Body of pancreas (tissue), 4 donors: ENCODE measurements at regions of chr12 and their contacts with region 1.

Region 1: GRCh38 chr12:101830367-101831325 is at the start of gene GNPTAB:
- DNase-seq: peak; percentile 96 to 98 (median 96)
- ATAC-seq: peak; percentile 98
- H3K4me3 ChIP-seq: peak within 1 kb of the TSS; percentile 45 to 84
- H3K27ac ChIP-seq: peak within 1 kb of the TSS; percentile 43 to 85 (median 77)
- H3K4me1 ChIP-seq: peaks cover 15% of the 10 kb centered on the region
- H3K27me3 ChIP-seq: no peaks in the 10 kb centered on the region
- CTCF ChIP-seq: peak; percentile 54 to 99 (median 90)
- POLR2A ChIP-seq: peak; percentile 20 to 49 (median 21)
- total RNA-seq, gene GNPTAB: 15.5 to 27.2 TPM

Region 2: GRCh38 chr12:101490286-101490920 is 340.2 kb before region 1 on chr12:
- intact Hi-C with region 1: loop called (anchors 5 kb)
- DNase-seq: peak; percentile 43 to 61 (median 58)
- ATAC-seq: peak; percentile 64
- H3K4me3 ChIP-seq: no peak overlapping the region
- H3K27ac ChIP-seq: no peak overlapping the region
- H3K4me1 ChIP-seq: no peaks in the 10 kb centered on the region
- H3K27me3 ChIP-seq: no peaks in the 10 kb centered on the region
- CTCF ChIP-seq: peak; percentile 33 to 78 (median 62)
- POLR2A ChIP-seq: no peak

Region 3: DNA sequence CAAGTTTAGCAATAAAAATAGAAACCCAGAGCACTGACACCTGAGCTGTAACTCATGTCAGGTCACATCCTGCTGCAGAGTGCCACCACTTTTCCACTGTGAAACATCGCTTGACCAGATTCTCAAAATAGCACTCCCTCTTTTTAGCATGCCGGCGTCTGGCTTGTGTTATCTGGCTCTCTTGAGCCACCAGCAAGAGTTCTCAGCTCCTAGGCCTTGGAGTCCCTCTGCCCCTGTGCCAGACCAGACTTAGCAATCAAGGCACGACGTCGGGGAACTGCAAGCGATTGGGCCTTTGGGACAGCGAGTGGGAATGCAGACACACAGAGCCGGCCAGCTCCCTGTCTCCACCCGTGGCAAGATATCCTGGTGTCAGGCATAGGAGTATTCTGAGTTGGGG is 303.0 kb before region 1 on chr12:
- intact Hi-C with region 1: no loop called
- DNase-seq: no peak
- ATAC-seq: no peak
- H3K4me3 ChIP-seq: no peak overlapping the region
- H3K27ac ChIP-seq: no peak overlapping the region
- H3K4me1 ChIP-seq: no peaks in the 10 kb centered on the region
- H3K27me3 ChIP-seq: no peaks in the 10 kb centered on the region
- CTCF ChIP-seq: no peak
- POLR2A ChIP-seq: no peak

Region 4: DNA sequence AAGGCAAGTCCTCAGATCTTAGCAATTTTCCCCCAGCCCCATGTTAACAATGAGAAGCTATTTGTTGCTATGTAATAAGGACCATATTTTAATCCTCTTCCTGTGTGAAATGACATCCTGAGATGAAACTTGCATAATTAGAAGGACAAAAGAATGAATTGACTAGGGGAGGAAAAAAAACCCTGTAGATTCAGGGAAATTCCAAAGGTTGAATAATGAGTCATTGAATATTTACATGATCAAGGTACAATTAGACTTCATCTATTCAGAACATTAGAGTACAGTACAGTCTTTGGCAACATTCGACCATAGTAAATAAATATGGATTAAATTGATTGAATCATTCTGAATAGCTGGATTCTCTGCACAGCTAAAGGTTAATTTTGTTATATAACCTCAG is 226.5 kb before region 1 on chr12:
- intact Hi-C with region 1: no loop called
- DNase-seq: no peak
- ATAC-seq: peak; percentile 7
- H3K4me3 ChIP-seq: no peak overlapping the region
- H3K27ac ChIP-seq: peak overlapping the region in 3 of 4 donors; percentile 17 to 46 (median 44)
- H3K4me1 ChIP-seq: peaks cover 79% of the 10 kb centered on the region
- H3K27me3 ChIP-seq: no peaks in the 10 kb centered on the region
- CTCF ChIP-seq: no peak
- POLR2A ChIP-seq: no peak